ENCODE measurements at regions of chr5 and their contacts with region 1.

Region 1: GRCh38 chr5:15821506-15821905 is 321.5 kb downstream of the FBXL7 start:
- DNase-seq: no peak
- ATAC-seq: no peak

Region 2: GRCh38 chr5:14895301-14895700 is 926.2 kb before region 1 on chr5:
- intact Hi-C with region 1: no loop called
- DNase-seq: no peak
- ATAC-seq: no peak

Region 3: DNA sequence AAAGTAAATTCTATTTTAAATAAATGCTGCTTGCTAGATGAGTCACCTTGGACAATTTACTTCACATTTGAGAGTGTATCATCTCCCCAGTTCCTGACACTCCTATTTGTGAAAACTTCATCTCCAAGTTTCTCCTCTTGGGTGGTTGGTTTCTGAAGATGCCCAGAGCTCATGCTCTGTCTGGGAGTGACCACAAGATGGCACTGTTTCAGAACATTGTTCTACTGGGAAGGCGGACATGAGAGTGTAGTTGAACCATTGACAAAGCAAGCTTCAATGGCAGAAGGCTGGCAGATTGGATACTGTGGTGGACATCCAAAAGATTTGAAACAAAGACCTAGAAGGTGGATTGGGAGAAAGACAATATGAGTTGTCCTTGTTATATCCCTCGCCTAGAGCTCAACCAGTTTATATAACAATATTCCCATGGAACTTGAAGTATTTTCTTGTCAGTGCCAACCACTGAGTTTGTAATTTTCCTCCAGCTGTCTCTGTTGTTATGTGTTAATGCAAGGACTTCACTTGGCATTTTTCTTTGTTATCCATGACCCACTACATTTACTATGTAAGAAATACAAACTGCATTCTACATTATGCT is 715.6 kb before region 1 on chr5:
- intact Hi-C with region 1: loop called in 1 of 2 experiments (anchors 10 kb)
- DNase-seq: peak; percentile 32
- ATAC-seq: peak; percentile 70 to 82

Region 4: GRCh38 chr5:15499528-15500324 is 321.8 kb before region 1 on chr5 and contains the start of gene FBXL7:
- intact Hi-C with region 1: loop called in 1 of 2 experiments (anchors 10 kb)
- DNase-seq: peak; percentile 87
- ATAC-seq: peak; percentile 89 to 90
- total RNA-seq, gene FBXL7: 18.1 to 19.8 TPM

Region 5: GRCh38 chr5:16552666-16553343 is 731.3 kb after region 1 on chr5:
- intact Hi-C with region 1: no loop called
- DNase-seq: peak; percentile 78
- ATAC-seq: peak; percentile 86 to 91